ENCODE measurements at regions of chrX and their contacts with region 1.

Region 1: GRCh38 chrX:3651276-3651675 is 62.2 kb downstream of the PRKX start:
- DNase-seq: no peak
- H3K4me3 ChIP-seq: no peak overlapping the region
- H3K27ac ChIP-seq: no peak overlapping the region
- H3K27me3 ChIP-seq: peaks cover 0 to 5% (median 0%) of the 10 kb centered on the region in 45 donors
- CTCF ChIP-seq: peak; percentile 38 to 82 (median 62)

Region 2: GRCh38 chrX:3713225-3713936 is 62.1 kb after region 1 on chrX and contains the start of gene PRKX:
- intact Hi-C with region 1: loop called in 1 of 2 experiments (anchors 5 kb)
- DNase-seq: peak in 4 of 10 donors; percentile 22 to 52 (median 40)
- H3K4me3 ChIP-seq: peak within 1 kb of the TSS; percentile 24 to 78 (median 63)
- H3K27ac ChIP-seq: peak within 1 kb of the TSS in 49 of 59 donors; percentile 16 to 79 (median 61)
- H3K27me3 ChIP-seq: peaks cover 0 to 70% (median 18%) of the 10 kb centered on the region in 45 donors
- CTCF ChIP-seq: peak in 1 of 56 donors; percentile 23
- total RNA-seq, gene PRKX: 5.5 to 38.7 (median 13.9) TPM

Region 3: DNA sequence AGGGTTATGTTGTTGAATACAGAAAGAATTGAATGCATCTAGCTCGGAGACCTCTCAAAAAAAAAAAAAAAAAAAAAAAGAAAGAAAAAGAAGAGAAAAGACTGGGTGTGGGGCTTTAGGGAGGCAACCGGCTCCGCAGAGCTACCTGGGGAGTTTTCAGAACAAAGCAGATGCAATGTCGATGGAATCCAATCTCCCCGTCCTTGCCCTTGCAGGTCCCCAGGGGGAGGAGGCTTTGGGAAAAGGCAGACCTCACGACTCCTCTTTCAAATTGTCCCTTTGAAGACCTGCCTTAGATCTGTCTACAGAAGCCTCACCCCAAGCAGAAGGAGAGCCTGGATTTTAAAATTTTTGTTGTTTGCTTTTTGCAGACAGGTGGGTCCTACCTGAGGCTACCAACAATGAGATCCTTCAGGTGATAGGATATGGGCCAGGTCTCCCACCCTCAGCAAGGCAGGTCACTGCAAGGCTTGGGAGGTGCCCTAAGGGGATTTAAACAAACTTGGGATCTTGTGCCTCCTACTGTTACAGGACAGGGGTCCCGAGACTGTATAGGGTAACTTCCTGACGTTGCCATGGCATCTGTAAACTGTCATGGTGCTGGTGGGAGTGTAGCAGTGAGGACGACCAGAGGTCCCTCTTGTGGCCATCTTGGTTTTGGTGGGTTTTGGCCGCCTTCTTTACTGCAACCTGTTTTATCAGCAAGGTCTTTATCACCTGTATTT is 137.4 kb after region 1 on chrX:
- intact Hi-C with region 1: loop called in 1 of 2 experiments (anchors 10 kb)
- DNase-seq: no peak
- H3K4me3 ChIP-seq: no peak overlapping the region
- H3K27ac ChIP-seq: no peak overlapping the region
- H3K27me3 ChIP-seq: peaks cover 0 to 73% (median 12%) of the 10 kb centered on the region in 45 donors
- CTCF ChIP-seq: peak in 7 of 56 donors; percentile 7 to 31 (median 16)

Region 4: GRCh38 chrX:3811331-3812311 is 160.3 kb after region 1 on chrX:
- intact Hi-C with region 1: loop called (anchors 2 to 5 kb)
- DNase-seq: peak in 6 of 10 donors; percentile 22 to 51 (median 38)
- H3K4me3 ChIP-seq: peak overlapping the region in 21 of 59 donors; percentile 0 to 40 (median 30)
- H3K27ac ChIP-seq: peak overlapping the region in 9 of 59 donors; percentile 4 to 57 (median 14)
- H3K27me3 ChIP-seq: peaks cover 0 to 39% (median 12%) of the 10 kb centered on the region in 45 donors
- CTCF ChIP-seq: peak; percentile 22 to 88 (median 70)

Measured in dorsolateral prefrontal cortex (tissue), 120 donors.